OCI-LY7 (cell line): ENCODE measurements at regions of chr6 and their contacts with region 1.

Region 1: DNA sequence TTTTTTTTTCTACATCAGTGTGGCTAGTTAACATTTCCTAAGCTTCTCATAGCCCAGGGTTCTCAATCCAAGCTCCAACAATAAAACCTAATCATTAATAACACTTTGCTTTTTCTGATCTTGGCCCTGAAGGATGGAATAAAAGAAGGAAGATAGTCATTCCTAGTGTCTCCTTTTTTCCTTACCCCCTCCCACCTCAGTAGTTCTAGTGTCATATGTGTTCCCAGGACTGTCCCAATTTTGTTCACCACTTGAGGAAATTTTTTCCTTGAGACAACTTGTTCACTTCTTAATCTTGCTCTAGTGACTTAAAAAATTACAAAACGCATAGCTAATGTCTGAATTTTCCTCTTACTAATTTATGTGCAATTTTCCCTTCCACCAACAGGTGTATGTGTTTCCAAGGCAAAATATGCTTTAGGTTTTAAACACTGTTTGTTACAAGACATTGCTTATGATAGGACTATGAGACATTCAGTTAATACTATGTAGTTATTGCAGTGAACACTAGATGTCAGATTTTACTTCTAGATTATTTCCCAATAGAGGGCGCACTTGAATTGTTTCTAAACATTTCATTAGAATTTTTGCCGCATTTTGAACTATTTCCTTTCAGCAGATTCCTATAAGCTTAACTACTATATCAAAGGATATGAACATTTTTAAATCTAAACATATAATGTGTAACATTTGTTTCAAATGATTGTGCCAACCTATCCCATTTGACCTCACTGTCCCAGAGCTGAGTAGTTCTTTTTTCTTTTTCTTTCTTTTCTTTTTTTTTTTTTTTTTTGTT is 18.5 kb upstream of the C6orf141 start:
- DNase-seq: peak; percentile 71
- H3K4me3 ChIP-seq: no peak overlapping the region
- H3K27ac ChIP-seq: no peak overlapping the region
- H3K4me1 ChIP-seq: no peaks in the 10 kb centered on the region
- CTCF ChIP-seq: peak; percentile 100

Region 2: DNA sequence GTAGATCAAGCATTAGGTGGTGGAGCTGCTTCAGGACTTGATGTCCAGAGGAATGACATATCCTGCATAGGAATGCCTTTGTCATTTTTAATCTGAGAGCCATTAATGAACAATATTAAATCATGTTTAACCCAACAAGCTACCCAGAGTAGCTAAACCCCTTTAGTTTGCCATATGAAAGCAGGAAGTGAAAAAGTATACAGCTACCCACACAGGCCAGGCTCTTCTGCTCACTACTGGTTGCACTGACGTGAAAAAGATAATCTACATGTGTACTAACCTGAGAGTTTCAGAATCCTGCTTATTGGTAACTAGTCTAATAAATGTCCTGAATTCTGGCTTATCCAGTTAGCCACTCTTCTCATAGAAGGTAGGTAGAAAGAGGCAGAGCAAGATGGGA is 12.3 kb before region 1 on chr6:
- CTCF ChIA-PET with region 1: no interaction called
- POLR2A ChIA-PET with region 1: no interaction called
- intact Hi-C with region 1: no loop called
- DNase-seq: no peak
- H3K4me3 ChIP-seq: no peak overlapping the region
- H3K27ac ChIP-seq: no peak overlapping the region
- H3K4me1 ChIP-seq: no peaks in the 10 kb centered on the region
- CTCF ChIP-seq: no peak

Region 3: GRCh38 chr6:49606696-49607390 is 74.9 kb after region 1 on chr6:
- CTCF ChIA-PET with region 1: no interaction called
- POLR2A ChIA-PET with region 1: no interaction called
- intact Hi-C with region 1: loop called (anchors 1 kb)
- DNase-seq: peak; percentile 72
- H3K4me3 ChIP-seq: no peak overlapping the region
- H3K27ac ChIP-seq: no peak overlapping the region
- H3K4me1 ChIP-seq: no peaks in the 10 kb centered on the region
- CTCF ChIP-seq: peak; percentile 93

Region 4: GRCh38 chr6:49849213-49849907 is 317.4 kb after region 1 on chr6:
- CTCF ChIA-PET with region 1: no interaction called
- POLR2A ChIA-PET with region 1: no interaction called
- intact Hi-C with region 1: loop called (anchors 2 kb)
- DNase-seq: peak; percentile 72
- H3K4me3 ChIP-seq: no peak overlapping the region
- H3K27ac ChIP-seq: no peak overlapping the region
- H3K4me1 ChIP-seq: no peaks in the 10 kb centered on the region
- CTCF ChIP-seq: peak; percentile 84